B cell (primary cell): ENCODE measurements at regions of chr13 and their contacts with region 1.

Region 1: GRCh38 chr13:96020155-96020575 is 33.0 kb downstream of the UGGT2 start:
- DNase-seq: peak; percentile 26
- ATAC-seq: no peak
- H3K4me3 ChIP-seq: no peak overlapping the region
- H3K4me3 Mint-ChIP-seq: no peak overlapping the region
- H3K27ac ChIP-seq: no peak overlapping the region
- H3K27ac Mint-ChIP-seq: no peak overlapping the region
- H3K4me1 ChIP-seq: no peaks in the 10 kb centered on the region
- H3K4me1 Mint-ChIP-seq: no peaks in the 10 kb centered on the region
- H3K27me3 ChIP-seq: no peaks in the 10 kb centered on the region
- H3K27me3 Mint-ChIP-seq: no peaks in the 10 kb centered on the region
- CTCF ChIP-seq: peak; percentile 36

Region 2: DNA sequence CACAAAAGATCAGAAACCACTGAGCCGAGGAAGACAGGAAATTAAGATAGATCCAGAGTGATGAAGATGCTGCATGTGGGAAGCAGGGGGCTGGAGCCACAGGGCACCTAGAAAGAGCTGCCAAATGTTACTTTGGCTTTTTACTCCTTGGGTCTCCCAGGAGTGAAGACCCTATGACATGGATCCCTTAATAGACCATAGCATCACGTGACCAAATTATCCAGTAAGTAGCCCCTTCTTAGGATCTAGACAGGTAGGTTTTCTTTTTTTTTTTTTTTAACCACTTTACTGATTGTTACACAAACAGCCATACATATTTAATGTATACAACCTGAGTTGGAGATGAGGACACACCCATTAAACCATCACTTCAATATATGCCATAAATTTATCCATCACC is 1123.9 kb before region 1 on chr13:
- CTCF ChIA-PET with region 1: no interaction called
- POLR2A ChIA-PET with region 1: no interaction called
- intact Hi-C with region 1: no loop called
- DNase-seq: no peak
- ATAC-seq: no peak
- H3K4me3 ChIP-seq: no peak overlapping the region
- H3K4me3 Mint-ChIP-seq: no peak overlapping the region
- H3K27ac ChIP-seq: no peak overlapping the region
- H3K27ac Mint-ChIP-seq: no peak overlapping the region
- H3K4me1 ChIP-seq: no peaks in the 10 kb centered on the region
- H3K4me1 Mint-ChIP-seq: no peaks in the 10 kb centered on the region
- H3K27me3 ChIP-seq: no peaks in the 10 kb centered on the region
- H3K27me3 Mint-ChIP-seq: no peaks in the 10 kb centered on the region
- CTCF ChIP-seq: no peak

Region 3: DNA sequence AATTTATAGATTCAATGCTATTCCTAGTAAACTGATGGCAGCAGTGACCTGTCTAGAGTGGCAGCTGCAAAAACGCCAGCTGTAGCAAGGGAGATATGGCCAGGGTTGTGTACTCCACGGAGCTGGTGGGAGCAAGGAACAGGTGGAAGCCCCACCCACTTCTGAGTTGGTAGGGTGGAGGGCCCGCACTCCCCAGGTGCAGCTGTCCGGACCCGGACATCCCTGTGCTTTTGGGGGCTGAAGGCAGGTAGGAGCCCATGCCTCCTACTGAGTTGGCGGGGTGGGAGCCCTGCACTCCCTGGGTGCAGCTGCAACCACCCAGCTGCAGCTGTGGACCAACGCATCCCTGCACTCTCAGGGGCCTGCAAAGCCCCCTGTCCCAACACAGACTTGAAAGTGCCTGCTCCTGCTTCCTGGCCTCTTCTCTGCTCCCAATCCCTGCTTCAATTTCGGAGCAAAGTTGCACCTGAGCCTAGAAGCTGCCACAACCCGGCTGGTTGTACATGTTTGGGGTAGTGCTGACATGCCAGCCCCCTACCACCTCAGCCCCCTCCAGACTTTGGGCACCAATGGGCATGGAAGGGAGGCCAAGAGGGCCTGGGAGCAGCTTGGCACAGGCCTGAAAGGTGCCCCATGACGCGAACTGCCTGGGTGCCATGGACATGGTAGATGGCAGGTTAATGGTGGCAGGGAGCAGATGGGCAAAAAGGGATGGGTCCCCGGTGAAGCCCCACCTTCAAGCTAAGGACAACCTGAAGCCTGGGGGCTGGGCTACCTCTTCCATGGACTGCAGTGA is 13.3 kb after region 1 on chr13:
- CTCF ChIA-PET with region 1: no interaction called
- POLR2A ChIA-PET with region 1: no interaction called
- intact Hi-C with region 1: no loop called
- DNase-seq: no peak
- ATAC-seq: no peak
- H3K4me3 ChIP-seq: no peak overlapping the region
- H3K4me3 Mint-ChIP-seq: no peak overlapping the region
- H3K27ac ChIP-seq: no peak overlapping the region
- H3K27ac Mint-ChIP-seq: no peak overlapping the region
- H3K4me1 ChIP-seq: no peaks in the 10 kb centered on the region
- H3K4me1 Mint-ChIP-seq: no peaks in the 10 kb centered on the region
- H3K27me3 ChIP-seq: no peaks in the 10 kb centered on the region
- H3K27me3 Mint-ChIP-seq: no peaks in the 10 kb centered on the region
- CTCF ChIP-seq: no peak

Region 4: GRCh38 chr13:96817336-96817941 is 797.3 kb after region 1 on chr13:
- CTCF ChIA-PET with region 1: interaction called, 8 read pairs
- POLR2A ChIA-PET with region 1: no interaction called
- intact Hi-C with region 1: loop called (anchors 5 kb)
- DNase-seq: no peak
- ATAC-seq: no peak
- H3K4me3 ChIP-seq: no peak overlapping the region
- H3K4me3 Mint-ChIP-seq: no peak overlapping the region
- H3K27ac ChIP-seq: no peak overlapping the region
- H3K27ac Mint-ChIP-seq: no peak overlapping the region
- H3K4me1 ChIP-seq: no peaks in the 10 kb centered on the region
- H3K4me1 Mint-ChIP-seq: no peaks in the 10 kb centered on the region
- H3K27me3 ChIP-seq: no peaks in the 10 kb centered on the region
- H3K27me3 Mint-ChIP-seq: no peaks in the 10 kb centered on the region
- CTCF ChIP-seq: no peak

Region 5: DNA sequence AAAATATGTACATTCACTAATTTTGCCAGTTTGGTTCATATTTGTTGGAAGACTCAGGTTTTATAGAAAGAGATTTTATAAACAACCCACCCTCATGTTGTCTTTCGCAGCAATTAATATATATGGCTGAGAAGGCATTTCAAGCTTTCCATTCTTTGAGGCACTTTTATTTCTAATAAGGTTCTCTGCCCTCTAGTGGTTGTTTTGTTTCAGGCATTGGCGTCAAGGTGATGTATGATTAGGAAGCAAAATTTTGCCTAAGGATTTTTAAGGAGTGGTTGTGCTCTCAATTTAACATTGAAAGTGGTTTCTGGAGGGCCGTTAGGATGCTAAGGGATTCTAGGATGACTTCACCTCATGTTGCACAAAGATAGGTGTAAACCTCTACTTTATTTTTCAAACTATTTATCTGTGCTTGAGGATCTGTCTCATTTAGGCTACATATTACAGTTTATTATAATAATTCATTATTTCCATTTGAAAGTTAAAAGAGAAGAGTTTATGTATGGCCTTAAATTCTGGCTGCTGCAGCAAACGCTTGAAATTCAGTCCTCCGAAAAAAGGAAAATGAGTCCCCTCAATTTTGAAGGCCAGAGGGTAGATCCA is 938.2 kb after region 1 on chr13:
- CTCF ChIA-PET with region 1: interaction called, 13 read pairs
- POLR2A ChIA-PET with region 1: no interaction called
- intact Hi-C with region 1: no loop called
- DNase-seq: no peak
- ATAC-seq: no peak
- H3K4me3 ChIP-seq: no peak overlapping the region
- H3K4me3 Mint-ChIP-seq: no peak overlapping the region
- H3K27ac ChIP-seq: no peak overlapping the region
- H3K27ac Mint-ChIP-seq: no peak overlapping the region
- H3K4me1 ChIP-seq: no peaks in the 10 kb centered on the region
- H3K4me1 Mint-ChIP-seq: no peaks in the 10 kb centered on the region
- H3K27me3 ChIP-seq: no peaks in the 10 kb centered on the region
- H3K27me3 Mint-ChIP-seq: no peaks in the 10 kb centered on the region
- CTCF ChIP-seq: peak; percentile 69

Region 6: DNA sequence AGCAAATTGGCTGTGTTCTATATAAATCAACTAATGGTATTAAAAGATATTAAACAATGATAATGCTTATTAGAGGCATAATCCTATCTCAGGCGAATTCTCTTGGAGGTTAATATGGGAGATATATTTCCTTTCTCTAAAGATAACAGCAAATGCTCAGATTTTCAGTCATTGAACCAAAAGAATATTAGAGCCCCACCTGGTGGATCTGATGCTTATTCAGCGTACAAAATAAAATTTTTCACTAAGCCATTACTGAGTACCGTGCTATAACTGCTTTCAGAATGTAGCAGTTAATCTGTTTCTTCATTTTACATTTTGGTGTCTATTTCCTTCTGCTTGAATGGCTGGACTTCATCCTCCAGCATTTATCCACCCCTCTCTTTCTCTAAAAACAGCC is 1790.0 kb after region 1 on chr13:
- CTCF ChIA-PET with region 1: no interaction called
- POLR2A ChIA-PET with region 1: no interaction called
- intact Hi-C with region 1: no loop called
- DNase-seq: no peak
- ATAC-seq: no peak
- H3K4me3 ChIP-seq: no peak overlapping the region
- H3K4me3 Mint-ChIP-seq: no peak overlapping the region
- H3K27ac ChIP-seq: no peak overlapping the region
- H3K27ac Mint-ChIP-seq: no peak overlapping the region
- H3K4me1 ChIP-seq: no peaks in the 10 kb centered on the region
- H3K4me1 Mint-ChIP-seq: no peaks in the 10 kb centered on the region
- H3K27me3 ChIP-seq: no peaks in the 10 kb centered on the region
- H3K27me3 Mint-ChIP-seq: peaks cover 26% of the 10 kb centered on the region
- CTCF ChIP-seq: no peak